HCT116 (cell line): ENCODE measurements at regions of chr17 and their contacts with region 1.

Region 1: DNA sequence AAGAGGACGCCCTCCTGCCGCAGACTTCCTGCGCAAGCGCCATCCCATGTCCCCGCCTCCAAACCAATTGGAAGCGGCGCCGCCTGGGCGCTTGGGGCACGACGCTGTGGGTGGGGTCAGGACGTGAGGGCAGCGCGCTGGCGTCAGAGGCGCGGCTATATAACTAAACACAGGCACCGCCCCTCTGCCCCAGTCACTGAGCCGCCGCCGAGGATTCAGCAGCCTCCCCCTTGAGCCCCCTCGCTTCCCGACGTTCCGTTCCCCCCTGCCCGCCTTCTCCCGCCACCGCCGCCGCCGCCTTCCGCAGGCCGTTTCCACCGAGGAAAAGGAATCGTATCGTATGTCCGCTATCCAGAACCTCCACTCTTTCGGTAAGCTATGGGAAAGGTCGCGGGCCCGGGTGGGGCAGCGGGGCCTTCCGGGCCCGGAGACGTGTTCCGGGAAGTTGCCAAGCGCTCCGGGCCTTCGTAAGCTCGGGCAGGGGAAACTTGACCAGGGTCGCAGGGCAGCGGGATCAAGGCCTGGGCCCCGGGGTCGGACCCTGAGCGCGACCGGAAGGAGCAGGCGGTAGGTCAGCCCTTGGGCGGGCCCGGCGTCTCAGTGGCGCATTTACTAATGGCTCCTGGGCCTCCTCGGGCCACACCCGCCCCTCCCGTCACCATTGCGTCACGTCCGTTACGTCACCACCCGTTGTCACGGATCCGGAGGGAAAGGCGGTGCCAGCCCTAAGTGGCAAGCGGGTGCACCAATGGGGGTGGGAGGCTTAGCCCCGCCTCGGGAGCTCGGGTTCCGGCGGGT is at the start of gene EIF1:
- DNase-seq: peak; percentile 99
- ATAC-seq: peak; percentile 76
- H3K4me3 ChIP-seq: peak within 1 kb of the TSS; percentile 81 to 93
- H3K27ac ChIP-seq: peak within 1 kb of the TSS; percentile 97
- H3K4me1 ChIP-seq: peaks cover 10 to 17% of the 10 kb centered on the region in 2 experiments
- H3K27me3 ChIP-seq: no peaks in the 10 kb centered on the region
- CTCF ChIP-seq: no peak
- POLR2A ChIP-seq: peak; percentile 93
- RAD21 ChIP-seq: no peak
- total RNA-seq, gene EIF1: 1,082 TPM

Region 2: DNA sequence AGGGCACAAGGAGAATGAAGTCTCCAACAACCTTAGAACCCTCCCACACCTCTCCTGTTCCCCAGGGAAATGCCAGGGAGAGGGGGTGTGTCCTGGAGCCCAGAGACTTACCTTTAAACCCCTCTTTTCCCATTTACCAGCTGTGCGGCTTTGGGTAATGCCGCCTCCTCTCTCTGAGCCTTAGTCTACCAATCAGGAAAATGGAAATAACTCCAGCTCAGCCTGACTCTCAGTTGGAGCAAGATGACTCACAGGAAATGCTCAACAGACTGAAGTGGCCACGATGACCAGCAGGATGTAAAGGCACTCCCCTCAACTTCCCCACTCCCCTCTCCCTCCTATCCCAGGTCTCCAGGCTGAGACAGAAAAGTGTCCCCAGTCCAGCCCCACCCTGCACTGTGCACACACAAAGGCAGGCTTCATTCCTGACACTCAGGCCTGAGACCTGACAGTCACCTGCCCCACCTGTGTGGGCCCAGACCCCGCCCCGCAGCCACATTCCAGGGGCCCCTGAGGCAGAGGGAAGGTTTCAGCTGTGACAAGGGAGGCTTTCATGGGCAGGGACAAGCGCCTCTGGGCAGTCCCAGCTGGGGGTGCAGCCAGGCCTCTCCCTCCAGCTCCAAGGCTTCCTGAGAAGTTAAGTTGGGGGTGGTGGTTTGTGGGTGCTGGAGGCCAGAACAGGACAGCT is 167.2 kb before region 1 on chr17:
- CTCF ChIA-PET with region 1: no interaction called
- POLR2A ChIA-PET with region 1: interaction called, 37 read pairs
- RAD21 ChIA-PET with region 1: no interaction called
- intact Hi-C with region 1: no loop called
- DNase-seq: peak; percentile 97
- ATAC-seq: peak; percentile 65
- H3K4me3 ChIP-seq: peak overlapping the region; percentile 36 to 47
- H3K27ac ChIP-seq: peak overlapping the region; percentile 99
- H3K4me1 ChIP-seq: peaks cover 74 to 91% of the 10 kb centered on the region in 2 experiments
- H3K27me3 ChIP-seq: no peaks in the 10 kb centered on the region
- CTCF ChIP-seq: no peak; a peak in 1 of 6 replicates
- POLR2A ChIP-seq: no peak
- RAD21 ChIP-seq: no peak

Region 3: GRCh38 chr17:41530062-41531051 is 158.5 kb before region 1 on chr17:
- CTCF ChIA-PET with region 1: no interaction called
- POLR2A ChIA-PET with region 1: interaction called, 37 read pairs
- RAD21 ChIA-PET with region 1: no interaction called
- intact Hi-C with region 1: no loop called
- DNase-seq: peak; percentile 86
- ATAC-seq: peak; percentile 66
- H3K4me3 ChIP-seq: peak overlapping the region; percentile 18 to 95
- H3K27ac ChIP-seq: peak overlapping the region; percentile 99
- H3K4me1 ChIP-seq: peaks cover 36 to 73% of the 10 kb centered on the region in 2 experiments
- H3K27me3 ChIP-seq: no peaks in the 10 kb centered on the region
- CTCF ChIP-seq: no peak
- POLR2A ChIP-seq: peak; percentile 45
- RAD21 ChIP-seq: no peak

Region 4: GRCh38 chr17:41654133-41654907 is 34.6 kb before region 1 on chr17:
- CTCF ChIA-PET with region 1: no interaction called
- POLR2A ChIA-PET with region 1: interaction called, 12 read pairs
- RAD21 ChIA-PET with region 1: no interaction called
- intact Hi-C with region 1: no loop called
- DNase-seq: peak; percentile 69
- ATAC-seq: peak; percentile 82
- H3K4me3 ChIP-seq: peak overlapping the region in 1 of 2 experiments; percentile 16; a peak in 2 of 4 replicates
- H3K27ac ChIP-seq: peak overlapping the region; percentile 71
- H3K4me1 ChIP-seq: peaks cover 45 to 78% of the 10 kb centered on the region in 2 experiments
- H3K27me3 ChIP-seq: no peaks in the 10 kb centered on the region
- CTCF ChIP-seq: no peak
- POLR2A ChIP-seq: no peak
- RAD21 ChIP-seq: no peak

Region 5: GRCh38 chr17:41705271-41705991 is 16.5 kb after region 1 on chr17:
- CTCF ChIA-PET with region 1: interaction called, 3 read pairs
- POLR2A ChIA-PET with region 1: interaction called, 32 read pairs
- RAD21 ChIA-PET with region 1: no interaction called
- intact Hi-C with region 1: no loop called
- DNase-seq: no peak
- ATAC-seq: no peak
- H3K4me3 ChIP-seq: no peak overlapping the region
- H3K27ac ChIP-seq: no peak overlapping the region
- H3K4me1 ChIP-seq: no peaks in the 10 kb centered on the region
- H3K27me3 ChIP-seq: no peaks in the 10 kb centered on the region
- CTCF ChIP-seq: no peak
- POLR2A ChIP-seq: no peak
- RAD21 ChIP-seq: no peak

Region 6: GRCh38 chr17:41792845-41793783 is 104.2 kb after region 1 on chr17:
- CTCF ChIA-PET with region 1: no interaction called
- POLR2A ChIA-PET with region 1: interaction called, 14 read pairs
- RAD21 ChIA-PET with region 1: no interaction called
- intact Hi-C with region 1: no loop called
- DNase-seq: peak; percentile 79
- ATAC-seq: peak; percentile 87
- H3K4me3 ChIP-seq: peak overlapping the region; percentile 41 to 56
- H3K27ac ChIP-seq: peak overlapping the region; percentile 93
- H3K4me1 ChIP-seq: peaks cover 40 to 56% of the 10 kb centered on the region in 2 experiments
- H3K27me3 ChIP-seq: no peaks in the 10 kb centered on the region
- CTCF ChIP-seq: no peak
- POLR2A ChIP-seq: no peak
- RAD21 ChIP-seq: peak; percentile 20; the same call in 1 of the 2 replicates